Dendritic cell treated with granulocyte-macrophage colony-stimulating factor and Interleukin-4, amounts not matched to agents 40 ng/mL and 50 ng/mL, for 4 days (primary cell): ENCODE measurements at regions of chr22 and their contacts with region 1.

Region 1: GRCh38 chr22:17501679-17502285 is 61.5 kb upstream of the SLC25A18 start:
- H3K4me3 Mint-ChIP-seq: no peak overlapping the region
- H3K27ac Mint-ChIP-seq: no peak overlapping the region
- H3K4me1 Mint-ChIP-seq: peaks cover 24% of the 10 kb centered on the region
- H3K27me3 Mint-ChIP-seq: no peaks in the 10 kb centered on the region

Region 2: DNA sequence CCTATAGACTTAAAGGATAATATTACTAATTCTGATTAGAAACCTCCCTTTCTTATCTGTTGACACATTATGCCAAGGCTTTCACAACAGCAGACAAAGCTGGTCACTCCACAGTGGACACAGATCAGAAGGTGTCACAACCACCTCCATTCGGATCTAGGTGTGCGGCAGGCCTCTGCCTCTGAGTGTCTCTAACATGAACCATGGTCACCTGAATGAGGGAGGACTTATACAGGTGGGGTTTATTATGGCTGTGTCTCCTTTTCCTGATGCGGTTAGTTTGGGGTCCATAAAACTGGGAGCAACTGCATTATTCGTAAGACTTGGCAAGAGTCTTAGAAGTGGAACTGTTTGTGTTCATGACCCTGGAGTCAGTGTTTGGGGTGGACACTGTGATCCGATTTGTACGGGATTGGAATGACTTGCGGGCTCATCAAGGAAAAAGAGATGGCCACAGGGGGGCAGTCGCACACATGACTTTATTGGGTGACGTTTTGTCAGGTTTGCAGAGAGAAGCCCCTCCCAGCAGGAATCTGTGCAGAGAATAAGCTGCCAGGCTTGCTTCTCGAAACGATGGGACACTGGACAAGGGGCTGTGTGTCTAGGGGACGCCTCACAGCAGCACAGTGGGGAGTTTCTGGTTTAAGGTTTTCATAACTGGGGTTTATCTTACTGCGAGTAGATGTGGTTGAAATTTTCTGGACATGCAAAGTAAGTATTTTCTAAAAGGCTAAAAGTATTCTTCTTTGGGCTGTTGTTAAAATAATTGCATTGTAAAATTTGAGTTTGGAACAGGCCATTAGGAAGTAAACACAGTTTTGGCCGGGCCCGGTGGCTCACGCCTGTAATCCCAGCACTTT is 584.4 kb before region 1 on chr22:
- intact Hi-C with region 1: loop called (anchors 5 kb)
- H3K4me3 Mint-ChIP-seq: no peak overlapping the region
- H3K27ac Mint-ChIP-seq: no peak overlapping the region
- H3K4me1 Mint-ChIP-seq: peaks cover 11% of the 10 kb centered on the region
- H3K27me3 Mint-ChIP-seq: peaks cover 3% of the 10 kb centered on the region

Region 3: GRCh38 chr22:17074648-17075002 is 427.2 kb before region 1 on chr22:
- intact Hi-C with region 1: loop called (anchors 1 kb)
- H3K4me3 Mint-ChIP-seq: no peak overlapping the region
- H3K27ac Mint-ChIP-seq: no peak overlapping the region
- H3K4me1 Mint-ChIP-seq: peaks cover 18% of the 10 kb centered on the region
- H3K27me3 Mint-ChIP-seq: peaks cover 2% of the 10 kb centered on the region

Region 4: GRCh38 chr22:17443405-17444203 is 58.2 kb before region 1 on chr22:
- intact Hi-C with region 1: no loop called
- H3K4me3 Mint-ChIP-seq: no peak overlapping the region
- H3K27ac Mint-ChIP-seq: no peak overlapping the region
- H3K4me1 Mint-ChIP-seq: no peaks in the 10 kb centered on the region
- H3K27me3 Mint-ChIP-seq: peaks cover 10% of the 10 kb centered on the region